ENCODE measurements at regions of chr11 and their contacts with region 1.

Region 1: DNA sequence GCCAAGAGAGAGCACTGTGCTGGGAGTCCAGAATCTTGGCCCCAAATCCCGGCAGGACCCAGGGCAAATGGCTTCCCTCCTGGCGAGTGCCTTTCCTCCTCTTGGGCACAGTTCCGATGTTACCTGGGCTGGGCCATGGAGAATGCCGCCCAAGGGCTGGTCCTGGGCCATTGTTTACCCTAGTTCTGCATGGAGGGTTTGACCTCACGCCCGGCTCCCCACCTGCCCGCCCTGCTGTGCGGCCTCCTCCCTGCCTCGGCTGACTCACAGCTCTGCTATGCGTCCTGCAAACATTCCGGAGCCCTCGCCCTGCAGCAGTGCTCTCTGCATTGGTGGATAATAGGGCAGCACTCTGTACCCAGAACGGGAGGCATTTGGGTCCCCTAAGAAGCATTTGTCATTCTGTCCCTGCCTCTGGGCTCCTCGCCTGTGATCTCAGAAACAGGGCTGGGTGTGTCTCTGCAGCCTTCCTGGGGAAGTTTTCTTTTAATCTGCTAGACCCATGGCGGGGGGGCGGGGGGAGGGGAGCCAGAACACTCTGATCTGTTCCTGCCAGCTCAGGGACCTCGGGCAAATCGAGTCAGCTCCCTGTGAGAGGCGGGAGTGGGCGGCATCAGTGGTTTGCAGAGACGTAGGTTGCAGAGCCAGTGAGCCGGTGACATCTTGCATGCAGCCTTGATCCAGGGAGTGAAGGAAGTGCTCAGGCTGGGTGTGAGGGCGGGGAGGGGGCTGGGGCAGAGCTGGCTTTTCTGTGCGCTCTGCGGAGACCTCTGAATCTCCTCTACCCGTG is 32.9 kb upstream of the SMIM38 start:
- DNase-seq: peak in 8 of 9 donors; percentile 51 to 78 (median 60)
- ATAC-seq: peak; percentile 85
- H3K4me3 ChIP-seq: peak overlapping the region; percentile 53
- H3K4me3 Mint-ChIP-seq: peak overlapping the region; percentile 69 to 86 (median 81)
- H3K27ac ChIP-seq: peak overlapping the region; percentile 76
- H3K27ac Mint-ChIP-seq: peak overlapping the region; percentile 80 to 94 (median 88)
- H3K4me1 ChIP-seq: peaks cover 4 to 42% of the 10 kb centered on the region in 2 donors
- H3K4me1 Mint-ChIP-seq: peaks cover 24 to 57% (median 40%) of the 10 kb centered on the region in 7 donors
- H3K27me3 ChIP-seq: no peaks in the 10 kb centered on the region
- H3K27me3 Mint-ChIP-seq: no peaks in the 10 kb centered on the region

Region 2: DNA sequence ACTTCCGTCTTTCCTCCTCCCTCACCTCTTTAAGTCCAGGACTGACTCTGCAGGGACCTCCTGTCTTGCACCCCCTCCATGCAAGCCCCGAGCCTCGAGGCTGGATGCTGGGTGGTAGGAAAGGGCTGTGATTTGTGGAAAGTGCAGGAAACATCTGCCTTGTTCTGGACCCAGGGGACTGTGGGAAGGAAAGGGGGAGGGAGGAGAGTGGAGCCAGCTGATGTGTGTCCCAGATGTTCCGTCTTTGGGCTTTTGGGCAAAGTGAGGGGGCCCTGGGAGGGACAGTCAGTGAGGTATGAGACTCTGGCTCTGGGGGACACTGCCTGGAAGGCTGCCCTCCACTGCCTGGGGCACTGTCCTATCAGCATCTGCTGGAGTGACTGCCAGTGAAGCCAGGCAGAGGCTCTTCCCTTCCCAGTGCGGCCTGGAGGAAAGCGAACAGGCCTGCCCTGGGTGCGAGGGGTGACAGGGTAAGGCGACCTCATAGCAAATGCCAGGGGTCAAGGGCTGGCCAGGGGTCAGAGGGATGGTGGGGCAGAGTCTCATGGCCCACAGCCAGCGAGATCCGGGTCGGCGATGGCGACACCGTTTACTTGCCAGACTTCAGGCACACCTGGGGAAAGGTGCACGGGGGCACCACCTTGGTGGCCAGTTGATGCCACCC is 143.8 kb before region 1 on chr11:
- CTCF ChIA-PET with region 1: no interaction called
- POLR2A ChIA-PET with region 1: no interaction called
- intact Hi-C with region 1: no loop called
- DNase-seq: no peak
- ATAC-seq: no peak
- H3K4me3 ChIP-seq: no peak overlapping the region
- H3K4me3 Mint-ChIP-seq: no peak overlapping the region
- H3K27ac ChIP-seq: no peak overlapping the region
- H3K27ac Mint-ChIP-seq: no peak overlapping the region
- H3K4me1 ChIP-seq: no peaks in the 10 kb centered on the region
- H3K4me1 Mint-ChIP-seq: peaks cover 0 to 2% (median 0%) of the 10 kb centered on the region in 7 donors
- H3K27me3 ChIP-seq: no peaks in the 10 kb centered on the region
- H3K27me3 Mint-ChIP-seq: peaks cover 0 to 6% (median 6%) of the 10 kb centered on the region in 5 donors

Region 3: GRCh38 chr11:69211920-69212571 is 89.2 kb after region 1 on chr11:
- CTCF ChIA-PET with region 1: no interaction called
- POLR2A ChIA-PET with region 1: no interaction called
- intact Hi-C with region 1: loop called in 1 of 2 experiments (anchors 5 kb)
- DNase-seq: no peak
- ATAC-seq: no peak
- H3K4me3 ChIP-seq: no peak overlapping the region
- H3K4me3 Mint-ChIP-seq: peak overlapping the region in 2 of 10 donors; percentile 19 to 25
- H3K27ac ChIP-seq: no peak overlapping the region
- H3K27ac Mint-ChIP-seq: no peak overlapping the region
- H3K4me1 ChIP-seq: no peaks in the 10 kb centered on the region
- H3K4me1 Mint-ChIP-seq: peaks cover 5 to 29% (median 11%) of the 10 kb centered on the region in 7 donors
- H3K27me3 ChIP-seq: no peaks in the 10 kb centered on the region
- H3K27me3 Mint-ChIP-seq: peaks cover 0 to 10% (median 0%) of the 10 kb centered on the region in 5 donors

Measured in naive thymus-derived CD4-positive, alpha-beta T cell (primary cell).